Left cardiac atrium (tissue), 4 donors: ENCODE measurements at regions of chr12 and their contacts with region 1.

Region 1: DNA sequence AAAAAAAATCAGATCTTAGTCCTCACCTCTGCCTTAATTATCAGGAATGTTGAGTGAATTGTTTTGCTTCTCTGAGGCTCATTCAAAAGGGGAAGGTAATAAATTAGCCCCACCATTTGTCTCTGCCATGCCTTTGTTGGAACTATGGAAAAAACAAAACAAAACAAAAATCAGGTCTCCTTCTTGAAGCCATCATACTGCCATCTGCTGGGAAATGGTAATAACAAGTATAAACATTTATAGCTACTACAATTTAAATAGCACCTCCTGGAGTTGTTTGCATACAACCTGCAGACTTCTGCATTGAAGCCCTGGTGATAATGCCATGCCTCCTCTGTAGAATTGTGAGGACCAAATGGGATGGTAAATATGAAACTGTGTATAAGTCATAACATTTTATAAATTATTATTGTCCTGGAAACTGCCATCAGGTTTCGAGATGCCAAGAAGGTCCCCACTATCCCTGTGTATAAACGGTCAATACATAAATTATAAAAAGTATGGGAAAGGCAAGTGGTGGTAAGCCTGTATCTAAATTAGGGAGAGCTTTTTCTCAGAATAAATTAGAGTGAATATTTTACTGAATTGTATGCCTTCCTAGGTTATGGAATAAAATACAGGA is 87.2 kb upstream of the FGD4 start:
- DNase-seq: no peak
- ATAC-seq: peak in 1 of 2 donors; percentile 16

Region 2: DNA sequence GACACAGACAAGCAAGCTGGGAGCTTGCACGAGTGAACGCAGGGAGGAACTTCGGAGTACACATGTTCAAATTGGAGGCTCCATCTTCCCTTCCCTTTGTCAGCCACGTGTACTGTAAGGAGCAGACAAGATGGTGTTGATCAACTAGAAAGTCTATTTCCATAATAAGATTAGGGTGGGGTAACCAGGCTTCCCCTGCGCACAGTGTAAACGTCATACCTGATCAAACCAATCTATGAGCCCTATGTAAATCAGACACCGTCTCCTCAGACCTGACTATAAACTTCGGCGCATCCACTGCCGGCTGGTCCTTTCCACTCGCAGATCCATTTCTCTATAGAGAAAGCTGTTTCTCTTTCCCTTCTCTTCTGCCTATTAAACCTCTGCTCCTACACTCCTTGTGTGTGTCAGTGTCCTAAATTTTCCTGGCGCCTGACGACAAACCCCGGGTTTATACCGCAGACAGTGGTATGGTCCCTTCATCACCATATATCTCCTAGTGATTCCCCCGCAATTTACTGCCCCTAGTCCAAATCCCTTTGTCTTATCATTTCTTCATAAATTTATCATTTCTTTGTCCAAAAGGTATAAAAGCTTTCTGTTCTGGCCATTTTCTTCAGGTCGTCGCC is 660.2 kb before region 1 on chr12:
- intact Hi-C with region 1: loop called (anchors 2 to 10 kb)
- DNase-seq: no peak
- ATAC-seq: no peak

Region 3: GRCh38 chr12:31659087-31659933 is 652.9 kb before region 1 on chr12 and contains the start of gene ETFBKMT:
- intact Hi-C with region 1: loop called in 1 of 2 experiments (anchors 10 kb)
- DNase-seq: peak; percentile 87
- ATAC-seq: peak; percentile 95 to 97
- total RNA-seq, gene ETFBKMT: 4.6 to 5.4 TPM

Region 4: GRCh38 chr12:32051559-32052414 is 260.4 kb before region 1 on chr12:
- intact Hi-C with region 1: loop called in 1 of 2 experiments (anchors 5 kb)
- DNase-seq: no peak
- ATAC-seq: peak; percentile 50 to 97